Dendritic cell treated with granulocyte-macrophage colony-stimulating factor and Interleukin-4, amounts not matched to agents 40 ng/mL and 50 ng/mL, for 4 days (primary cell): ENCODE measurements at regions of chr1 and their contacts with region 1.

Region 1: DNA sequence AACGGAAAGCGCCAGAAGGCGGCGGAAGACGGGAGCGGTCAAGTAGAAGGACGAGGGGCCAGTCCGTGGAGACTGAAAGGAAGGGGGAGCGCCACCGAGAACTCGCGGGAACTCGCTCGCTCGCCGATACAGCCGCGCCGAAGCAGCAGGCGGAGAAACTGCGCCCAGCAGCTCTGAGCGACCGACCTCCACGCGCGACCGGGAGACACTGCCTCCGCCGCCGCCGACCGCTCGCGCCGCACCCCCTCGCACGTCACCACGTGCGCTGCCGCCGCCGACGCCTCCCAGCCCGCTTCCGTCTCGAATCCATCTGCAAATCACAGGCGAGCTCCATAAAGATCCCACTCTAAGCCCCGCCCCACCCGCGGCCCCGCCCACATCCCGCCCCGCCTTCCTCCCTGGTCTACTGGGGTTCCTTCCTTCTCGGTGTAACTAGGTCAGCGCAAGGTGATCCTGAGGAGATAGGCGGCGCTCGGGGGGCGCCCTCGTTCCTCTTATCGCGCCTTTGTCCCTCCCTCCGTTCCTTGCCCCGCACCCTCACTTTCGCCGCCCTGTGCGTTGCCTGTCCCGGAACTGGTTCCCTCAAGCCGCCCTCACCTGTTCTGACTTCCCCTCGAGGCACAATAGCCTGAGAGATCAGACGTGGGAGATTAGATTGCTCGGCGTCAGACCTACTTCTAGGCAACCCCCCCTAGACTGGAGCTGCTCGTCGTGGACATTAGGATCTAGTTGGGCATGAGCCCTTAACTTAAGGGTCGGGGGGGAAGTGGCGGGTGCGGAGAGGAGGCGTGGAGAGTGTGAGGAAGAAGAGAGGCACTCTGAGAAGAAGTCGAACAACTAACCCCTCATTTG is at the start of gene IVNS1ABP:
- H3K4me3 Mint-ChIP-seq: peak within 1 kb of the TSS; percentile 99
- H3K27ac Mint-ChIP-seq: peak within 1 kb of the TSS; percentile 100
- H3K4me1 Mint-ChIP-seq: peaks cover 34% of the 10 kb centered on the region
- H3K27me3 Mint-ChIP-seq: no peaks in the 10 kb centered on the region

Region 2: GRCh38 chr1:185156854-185157598 is 160.2 kb before region 1 on chr1 and contains the starts of genes SWT1 and TRMT1L:
- intact Hi-C with region 1: loop called (anchors 5 kb)
- H3K4me3 Mint-ChIP-seq: peak within 1 kb of the TSS; percentile 89
- H3K27ac Mint-ChIP-seq: peak within 1 kb of the TSS; percentile 99
- H3K4me1 Mint-ChIP-seq: peaks cover 41% of the 10 kb centered on the region
- H3K27me3 Mint-ChIP-seq: no peaks in the 10 kb centered on the region

Region 3: DNA sequence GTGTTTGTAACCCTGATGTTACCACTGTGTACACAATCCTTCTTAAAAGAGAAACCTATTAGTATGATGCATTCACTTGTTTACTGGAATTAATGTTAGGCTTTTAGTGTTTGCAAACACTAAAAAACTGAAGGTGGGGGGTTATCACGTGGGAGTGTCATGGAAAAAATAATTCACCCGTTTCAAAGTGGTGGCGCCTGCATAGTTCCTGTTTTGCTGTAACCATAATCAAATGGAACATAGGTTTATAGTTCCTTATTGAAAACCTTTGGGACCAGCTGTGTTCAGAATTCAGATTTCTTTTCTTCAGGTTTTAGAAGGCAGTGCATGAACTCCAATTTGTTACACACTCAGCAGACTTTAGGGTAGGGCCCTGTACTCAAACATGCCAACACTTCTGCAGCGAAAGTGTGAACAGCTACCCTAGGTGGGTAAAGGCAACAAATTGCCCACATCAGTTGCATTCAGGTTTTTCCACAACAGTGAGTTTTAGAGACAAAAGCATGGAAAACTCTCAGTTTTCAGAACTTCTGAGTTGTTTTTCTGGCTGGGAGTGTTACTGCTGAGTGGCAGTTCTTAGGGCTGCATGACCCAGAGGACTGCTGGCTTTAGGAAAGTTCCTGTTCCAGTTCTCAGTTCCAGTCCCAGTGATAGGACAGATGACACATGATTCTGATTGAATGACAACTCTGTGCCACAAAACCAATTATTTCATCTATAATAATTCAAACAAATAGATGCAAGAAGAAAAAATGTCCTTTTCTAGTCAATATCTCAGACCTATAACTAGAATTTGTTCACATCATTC is 28.9 kb after region 1 on chr1:
- intact Hi-C with region 1: loop called (anchors 2 kb)
- H3K4me3 Mint-ChIP-seq: no peak overlapping the region
- H3K27ac Mint-ChIP-seq: peak overlapping the region; percentile 96
- H3K4me1 Mint-ChIP-seq: peaks cover 50% of the 10 kb centered on the region
- H3K27me3 Mint-ChIP-seq: no peaks in the 10 kb centered on the region

Region 4: GRCh38 chr1:185439727-185440415 is 122.6 kb after region 1 on chr1:
- intact Hi-C with region 1: loop called (anchors 2 kb)
- H3K4me3 Mint-ChIP-seq: no peak overlapping the region
- H3K27ac Mint-ChIP-seq: no peak overlapping the region
- H3K4me1 Mint-ChIP-seq: peaks cover 15% of the 10 kb centered on the region
- H3K27me3 Mint-ChIP-seq: no peaks in the 10 kb centered on the region

Region 5: GRCh38 chr1:185670187-185670627 is 352.9 kb after region 1 on chr1:
- intact Hi-C with region 1: loop called (anchors 5 kb)
- H3K4me3 Mint-ChIP-seq: no peak overlapping the region
- H3K27ac Mint-ChIP-seq: no peak overlapping the region
- H3K4me1 Mint-ChIP-seq: peaks cover 30% of the 10 kb centered on the region
- H3K27me3 Mint-ChIP-seq: no peaks in the 10 kb centered on the region